GM12878 (cell line): ENCODE measurements at regions of chr2 and their contacts with region 1.

Region 1: GRCh38 chr2:190679813-190680591 is 31.1 kb downstream of the NAB1 start:
- DNase-seq: peak; percentile 54
- ATAC-seq: peak; percentile 81
- H3K4me3 ChIP-seq: peak overlapping the region; percentile 6; the same call in 1 of the 2 replicates
- H3K27ac ChIP-seq: peak overlapping the region; percentile 87
- H3K4me1 ChIP-seq: peaks cover 43% of the 10 kb centered on the region
- H3K27me3 ChIP-seq: no peaks in the 10 kb centered on the region
- CTCF ChIP-seq: peak; percentile 65 to 85 (median 82)
- EP300 ChIP-seq: 0 out of 4 replicates have a peak, but pooled peaks of 1 of the 2 experiments have one; percentile 42
- POLR2A ChIP-seq: peak; percentile 86
- RAD21 ChIP-seq: peak; percentile 84

Region 2: GRCh38 chr2:190528521-190529001 is 151.4 kb before region 1 on chr2:
- CTCF ChIA-PET with region 1: interaction called, 32 read pairs
- POLR2A ChIA-PET with region 1: interaction called, 29 read pairs
- RAD21 ChIA-PET with region 1: interaction called, 38 read pairs
- SMC1A ChIA-PET with region 1: interaction called, 36 read pairs
- in situ Hi-C with region 1: no loop called
- intact Hi-C with region 1: no loop called
- DNase-seq: no peak
- ATAC-seq: peak; percentile 6; the same call in 1 of the 3 replicates
- H3K4me3 ChIP-seq: no peak overlapping the region
- H3K27ac ChIP-seq: no peak overlapping the region
- H3K4me1 ChIP-seq: peaks cover 44% of the 10 kb centered on the region
- H3K27me3 ChIP-seq: no peaks in the 10 kb centered on the region
- CTCF ChIP-seq: no peak
- EP300 ChIP-seq: no peak
- POLR2A ChIP-seq: no peak
- RAD21 ChIP-seq: no peak

Region 3: GRCh38 chr2:190607014-190607597 is 72.9 kb before region 1 on chr2:
- CTCF ChIA-PET with region 1: interaction called, 4 read pairs
- POLR2A ChIA-PET with region 1: interaction called, 10 read pairs
- RAD21 ChIA-PET with region 1: interaction called, 20 read pairs
- SMC1A ChIA-PET with region 1: interaction called, 4 read pairs
- in situ Hi-C with region 1: no loop called
- intact Hi-C with region 1: no loop called
- DNase-seq: no peak
- ATAC-seq: peak; percentile 19; the same call in 1 of the 3 replicates
- H3K4me3 ChIP-seq: no peak overlapping the region
- H3K27ac ChIP-seq: no peak overlapping the region
- H3K4me1 ChIP-seq: peaks cover 15% of the 10 kb centered on the region
- H3K27me3 ChIP-seq: no peaks in the 10 kb centered on the region
- CTCF ChIP-seq: no peak
- EP300 ChIP-seq: no peak
- POLR2A ChIP-seq: no peak
- RAD21 ChIP-seq: no peak

Region 4: GRCh38 chr2:190664240-190664639 is 15.8 kb before region 1 on chr2:
- CTCF ChIA-PET with region 1: interaction called, 78 read pairs
- POLR2A ChIA-PET with region 1: interaction called, 45 read pairs
- RAD21 ChIA-PET with region 1: interaction called, 91 read pairs
- SMC1A ChIA-PET with region 1: interaction called, 206 read pairs
- in situ Hi-C with region 1: no loop called
- intact Hi-C with region 1: no loop called
- DNase-seq: no peak
- ATAC-seq: no peak
- H3K4me3 ChIP-seq: no peak overlapping the region
- H3K27ac ChIP-seq: no peak overlapping the region
- H3K4me1 ChIP-seq: peaks cover 7% of the 10 kb centered on the region; the same call in 1 of the 2 replicates
- H3K27me3 ChIP-seq: no peaks in the 10 kb centered on the region
- CTCF ChIP-seq: no peak
- EP300 ChIP-seq: no peak
- POLR2A ChIP-seq: no peak
- RAD21 ChIP-seq: no peak

Region 5: DNA sequence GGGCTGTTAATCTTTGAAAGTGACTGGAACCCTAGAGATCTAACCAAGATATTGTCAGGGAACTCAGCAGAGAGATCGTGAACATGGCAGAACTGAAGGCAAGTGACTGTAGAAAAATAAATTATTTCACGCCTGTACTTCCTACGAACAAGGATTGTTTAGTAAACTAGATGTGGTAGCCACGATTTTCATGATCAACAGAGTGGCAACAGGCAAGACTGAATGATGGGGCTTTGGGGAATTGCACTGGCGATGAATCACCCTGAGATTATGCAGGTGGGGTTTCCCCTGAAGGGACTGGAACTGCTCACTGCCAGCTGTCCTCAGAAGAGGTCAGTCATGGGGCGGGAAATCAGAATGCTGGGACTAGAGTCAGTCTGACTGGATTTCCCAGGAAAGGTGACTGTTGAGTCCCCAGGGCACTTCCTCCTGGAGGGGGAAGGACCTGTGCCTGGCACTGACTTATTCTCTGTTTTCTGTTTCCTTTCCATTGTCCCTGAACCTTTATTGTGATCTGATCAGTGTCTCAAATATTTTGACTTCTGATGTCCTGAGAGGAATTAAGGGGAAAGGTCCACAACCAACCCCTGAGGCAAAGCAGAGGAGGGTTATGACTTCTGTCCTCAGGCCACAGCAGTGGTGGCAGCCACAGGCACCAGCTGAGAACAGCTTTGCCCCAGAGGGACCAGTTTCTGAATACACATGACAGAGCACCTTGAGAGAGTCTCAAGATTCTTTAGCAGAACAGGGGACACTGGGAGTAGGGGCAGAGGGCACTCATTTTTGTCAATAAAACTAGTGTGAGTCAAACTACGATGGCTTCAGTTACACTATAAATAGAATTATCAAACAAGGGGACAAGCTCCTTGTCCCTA is 38.9 kb after region 1 on chr2:
- CTCF ChIA-PET with region 1: interaction called, 19 read pairs
- POLR2A ChIA-PET with region 1: interaction called, 40 read pairs
- RAD21 ChIA-PET with region 1: interaction called, 99 read pairs
- SMC1A ChIA-PET with region 1: interaction called, 127 read pairs
- in situ Hi-C with region 1: no loop called
- intact Hi-C with region 1: loop called (anchors 1 kb)
- DNase-seq: peak; percentile 68
- ATAC-seq: peak; percentile 81
- H3K4me3 ChIP-seq: no peak overlapping the region
- H3K27ac ChIP-seq: peak overlapping the region; percentile 57
- H3K4me1 ChIP-seq: peaks cover 41% of the 10 kb centered on the region
- H3K27me3 ChIP-seq: no peaks in the 10 kb centered on the region
- CTCF ChIP-seq: peak in 1 of 3 experiments; percentile 19; a peak in 1 of 6 replicates
- EP300 ChIP-seq: peak; percentile 71 to 75; a peak in 3 of 4 replicates
- POLR2A ChIP-seq: 0 out of 2 replicates have a peak, but pooled peaks have one; percentile 38
- RAD21 ChIP-seq: peak; percentile 32; the same call in 1 of the 2 replicates

Region 6: DNA sequence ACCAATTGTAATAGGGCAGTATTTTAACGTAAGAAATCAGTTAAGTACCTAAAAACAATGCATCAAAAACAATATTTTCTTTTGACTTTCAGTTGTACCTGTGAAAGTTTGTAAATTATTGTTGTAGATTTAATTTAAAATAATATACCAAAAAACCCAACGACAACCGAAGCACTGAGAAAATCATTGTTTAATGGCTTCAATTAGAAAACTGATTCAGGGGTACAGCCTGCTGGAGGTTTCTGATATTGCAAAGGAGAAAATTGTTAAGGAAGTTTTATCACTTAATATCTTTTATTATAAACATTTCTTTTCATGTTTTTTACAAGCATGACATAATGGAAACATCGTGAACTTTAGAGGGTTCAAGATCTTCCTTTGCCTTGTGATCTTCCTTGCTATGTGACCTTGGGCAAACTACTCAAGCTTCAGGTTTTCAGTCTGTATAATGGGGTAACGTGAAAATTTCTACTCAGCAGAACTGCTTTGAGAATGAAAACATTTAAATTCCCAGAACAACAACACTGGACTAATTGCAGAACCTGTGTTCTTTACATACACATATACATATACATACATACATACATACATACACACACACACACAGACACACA is 124.3 kb after region 1 on chr2:
- CTCF ChIA-PET with region 1: interaction called, 4 read pairs
- POLR2A ChIA-PET with region 1: no interaction called
- RAD21 ChIA-PET with region 1: interaction called, 9 read pairs
- SMC1A ChIA-PET with region 1: interaction called, 11 read pairs
- in situ Hi-C with region 1: no loop called
- intact Hi-C with region 1: no loop called
- DNase-seq: no peak
- ATAC-seq: no peak
- H3K4me3 ChIP-seq: no peak overlapping the region
- H3K27ac ChIP-seq: no peak overlapping the region
- H3K4me1 ChIP-seq: peaks cover 5% of the 10 kb centered on the region; the same call in 1 of the 2 replicates
- H3K27me3 ChIP-seq: no peaks in the 10 kb centered on the region
- CTCF ChIP-seq: peak; percentile 34 to 63 (median 48); a peak in 5 of 6 replicates
- EP300 ChIP-seq: no peak
- POLR2A ChIP-seq: no peak
- RAD21 ChIP-seq: peak; percentile 89